ENCODE measurements at regions of chr13 and their contacts with region 1.

Region 1: GRCh38 chr13:99721606-99722337 is 220.5 kb downstream of the TM9SF2 start:
- DNase-seq: no peak
- ATAC-seq: no peak
- H3K4me3 ChIP-seq: no peak overlapping the region
- H3K4me3 Mint-ChIP-seq: no peak overlapping the region
- H3K27ac ChIP-seq: no peak overlapping the region
- H3K27ac Mint-ChIP-seq: no peak overlapping the region
- H3K4me1 ChIP-seq: no peaks in the 10 kb centered on the region
- H3K4me1 Mint-ChIP-seq: no peaks in the 10 kb centered on the region
- H3K27me3 ChIP-seq: no peaks in the 10 kb centered on the region
- H3K27me3 Mint-ChIP-seq: no peaks in the 10 kb centered on the region
- CTCF ChIP-seq: no peak

Region 2: GRCh38 chr13:99004978-99005377 is 716.8 kb before region 1 on chr13:
- CTCF ChIA-PET with region 1: no interaction called
- POLR2A ChIA-PET with region 1: no interaction called
- intact Hi-C with region 1: no loop called
- DNase-seq: no peak
- ATAC-seq: no peak
- H3K4me3 ChIP-seq: no peak overlapping the region
- H3K4me3 Mint-ChIP-seq: no peak overlapping the region
- H3K27ac ChIP-seq: no peak overlapping the region
- H3K27ac Mint-ChIP-seq: no peak overlapping the region
- H3K4me1 ChIP-seq: peaks cover 61% of the 10 kb centered on the region
- H3K4me1 Mint-ChIP-seq: peaks cover 72% of the 10 kb centered on the region
- H3K27me3 ChIP-seq: no peaks in the 10 kb centered on the region
- H3K27me3 Mint-ChIP-seq: no peaks in the 10 kb centered on the region
- CTCF ChIP-seq: no peak

Region 3: GRCh38 chr13:100063333-100063732 is 341.6 kb after region 1 on chr13:
- CTCF ChIA-PET with region 1: no interaction called
- POLR2A ChIA-PET with region 1: no interaction called
- intact Hi-C with region 1: no loop called
- DNase-seq: no peak
- ATAC-seq: no peak
- H3K4me3 ChIP-seq: no peak overlapping the region
- H3K4me3 Mint-ChIP-seq: no peak overlapping the region
- H3K27ac ChIP-seq: no peak overlapping the region
- H3K27ac Mint-ChIP-seq: no peak overlapping the region
- H3K4me1 ChIP-seq: no peaks in the 10 kb centered on the region
- H3K4me1 Mint-ChIP-seq: no peaks in the 10 kb centered on the region
- H3K27me3 ChIP-seq: peaks cover 0 to 3% of the 10 kb centered on the region in 2 experiments
- H3K27me3 Mint-ChIP-seq: peaks cover 21% of the 10 kb centered on the region
- CTCF ChIP-seq: no peak

Region 4: DNA sequence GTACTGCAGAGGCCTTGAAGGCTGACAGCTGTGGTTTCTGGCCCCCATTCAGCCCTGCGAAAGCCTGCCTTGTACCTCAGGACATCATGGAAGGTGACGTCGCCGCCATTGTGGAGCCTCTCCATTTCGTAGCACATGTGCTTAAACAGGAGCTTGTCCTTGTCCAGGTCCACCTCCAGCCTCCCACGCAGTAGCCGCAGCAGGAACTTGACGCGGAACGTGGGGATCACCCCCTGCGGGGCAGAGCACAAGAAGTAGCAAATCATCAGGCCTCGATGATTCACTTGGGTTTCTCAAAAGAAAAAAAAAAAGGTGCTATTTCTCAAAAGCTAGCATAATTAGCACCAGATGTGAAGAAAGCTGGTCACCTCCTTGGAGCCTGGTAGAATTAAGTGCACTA is 1343.6 kb after region 1 on chr13:
- CTCF ChIA-PET with region 1: no interaction called
- POLR2A ChIA-PET with region 1: no interaction called
- intact Hi-C with region 1: loop called in 1 of 2 experiments (anchors 10 kb)
- DNase-seq: no peak
- ATAC-seq: no peak
- H3K4me3 ChIP-seq: no peak overlapping the region
- H3K4me3 Mint-ChIP-seq: no peak overlapping the region
- H3K27ac ChIP-seq: no peak overlapping the region
- H3K27ac Mint-ChIP-seq: no peak overlapping the region
- H3K4me1 ChIP-seq: no peaks in the 10 kb centered on the region
- H3K4me1 Mint-ChIP-seq: no peaks in the 10 kb centered on the region
- H3K27me3 ChIP-seq: no peaks in the 10 kb centered on the region
- H3K27me3 Mint-ChIP-seq: peaks cover 34% of the 10 kb centered on the region
- CTCF ChIP-seq: no peak

Region 5: DNA sequence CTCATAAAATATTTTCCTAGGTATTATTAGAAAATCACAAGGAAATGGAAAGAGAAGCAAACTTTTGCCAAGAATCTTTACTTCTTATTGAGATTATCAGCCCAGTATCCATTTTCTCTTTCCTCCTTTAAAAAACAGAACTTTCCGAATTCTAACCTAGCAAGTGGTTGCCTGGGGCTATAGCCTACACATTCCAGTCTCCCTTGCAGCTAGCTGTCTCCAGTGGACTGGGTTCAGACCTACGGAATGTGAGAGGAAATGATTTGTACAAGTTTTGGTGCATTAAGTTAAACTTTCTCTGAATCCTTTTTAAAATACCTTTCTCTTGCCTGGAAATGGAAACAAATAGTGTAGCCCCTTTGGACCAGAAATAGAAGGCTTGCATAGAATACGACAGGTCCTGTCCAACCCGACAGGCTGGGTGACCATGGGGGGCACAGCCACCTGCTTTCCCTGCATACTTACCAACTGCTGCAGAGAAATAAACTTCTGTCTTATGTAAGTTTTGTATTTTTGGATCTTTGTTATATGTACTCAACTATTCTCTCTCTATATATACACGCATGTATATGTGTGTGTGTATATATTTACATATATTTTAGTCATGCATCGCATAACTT is 1508.6 kb after region 1 on chr13:
- CTCF ChIA-PET with region 1: no interaction called
- POLR2A ChIA-PET with region 1: no interaction called
- intact Hi-C with region 1: no loop called
- DNase-seq: no peak
- ATAC-seq: no peak
- H3K4me3 ChIP-seq: no peak overlapping the region
- H3K4me3 Mint-ChIP-seq: no peak overlapping the region
- H3K27ac ChIP-seq: no peak overlapping the region
- H3K27ac Mint-ChIP-seq: no peak overlapping the region
- H3K4me1 ChIP-seq: no peaks in the 10 kb centered on the region
- H3K4me1 Mint-ChIP-seq: no peaks in the 10 kb centered on the region
- H3K27me3 ChIP-seq: no peaks in the 10 kb centered on the region
- H3K27me3 Mint-ChIP-seq: peaks cover 8% of the 10 kb centered on the region
- CTCF ChIP-seq: no peak